ENCODE measurements at regions of chr1 and their contacts with region 1.

Region 1: DNA sequence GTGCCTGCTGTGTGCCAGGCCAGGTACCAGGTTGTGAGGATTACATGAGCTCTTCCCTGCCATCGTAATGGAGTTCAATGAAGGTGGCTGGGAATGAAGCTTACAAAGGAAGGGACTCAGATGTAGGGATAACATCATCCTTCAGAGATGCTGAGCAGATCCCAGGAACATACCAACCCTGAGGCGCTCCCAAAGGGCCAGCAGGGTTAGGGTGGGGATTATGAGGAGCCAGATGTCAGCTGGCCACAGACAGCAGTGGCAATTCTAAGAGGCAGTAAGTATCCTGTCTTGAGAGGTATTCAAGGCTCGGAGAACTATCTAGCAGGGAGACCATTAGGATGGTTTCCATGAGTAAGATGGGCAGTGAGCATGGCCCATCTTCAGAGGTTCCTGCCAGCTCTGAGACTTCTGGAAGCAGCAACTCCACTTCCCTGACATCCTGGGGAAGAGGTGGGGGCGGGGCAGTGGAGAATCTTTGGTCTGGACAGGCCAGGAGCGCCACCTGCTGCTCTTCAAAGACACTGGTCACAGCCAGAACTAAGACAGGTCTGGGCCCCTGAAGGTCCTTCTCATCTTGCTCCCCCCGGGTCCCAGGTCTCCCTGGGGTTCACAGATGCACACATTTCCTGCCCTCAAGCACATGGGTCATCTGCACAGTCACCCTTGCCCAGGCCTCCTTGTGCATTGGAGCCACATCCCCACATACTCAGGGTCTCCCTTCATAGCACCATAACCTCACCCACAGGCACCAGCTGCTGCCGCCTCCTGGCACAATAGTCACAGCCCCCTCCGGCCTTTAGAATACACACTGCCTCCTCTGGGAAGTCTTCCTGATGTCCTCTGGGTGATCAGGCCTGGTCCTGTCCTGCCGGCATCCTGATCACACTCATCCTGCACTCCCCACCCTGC is 2.7 kb upstream of the SDC3 start:
- DNase-seq: peak; percentile 57 to 86
- H3K4me3 ChIP-seq: no peak overlapping the region
- H3K27ac ChIP-seq: no peak overlapping the region
- H3K4me1 ChIP-seq: peaks cover 0 to 22% (median 17%) of the 10 kb centered on the region in 4 experiments; a peak in 6 of 7 replicates
- H3K27me3 ChIP-seq: peaks cover 0 to 20% (median 12%) of the 10 kb centered on the region in 4 experiments; a peak in 4 of 7 replicates
- CTCF ChIP-seq: peak; percentile 84 to 97 (median 88)
- EP300 ChIP-seq: no peak
- POLR2A ChIP-seq: no peak
- RAD21 ChIP-seq: peak; percentile 99 to 100

Region 2: GRCh38 chr1:30732277-30732996 is 178.9 kb before region 1 on chr1:
- CTCF ChIA-PET with region 1: interaction called, 51 read pairs
- POLR2A ChIA-PET with region 1: no interaction called
- DNase-seq: no peak
- H3K4me3 ChIP-seq: no peak overlapping the region
- H3K27ac ChIP-seq: no peak overlapping the region
- H3K4me1 ChIP-seq: peaks cover 0 to 7% (median 2%) of the 10 kb centered on the region in 4 experiments; a peak in 4 of 7 replicates
- H3K27me3 ChIP-seq: no peaks in the 10 kb centered on the region
- CTCF ChIP-seq: no peak
- EP300 ChIP-seq: no peak
- POLR2A ChIP-seq: no peak
- RAD21 ChIP-seq: no peak

Region 3: GRCh38 chr1:30816211-30817076 is 94.9 kb before region 1 on chr1:
- CTCF ChIA-PET with region 1: interaction called, 1,519 read pairs
- POLR2A ChIA-PET with region 1: no interaction called
- DNase-seq: peak in 1 of 2 experiments; percentile 93
- H3K4me3 ChIP-seq: peak overlapping the region in 2 of 4 experiments; percentile 8 to 29; a peak in 2 of 8 replicates
- H3K27ac ChIP-seq: no peak overlapping the region
- H3K4me1 ChIP-seq: peaks cover 13 to 28% (median 17%) of the 10 kb centered on the region in 4 experiments
- H3K27me3 ChIP-seq: no peaks in the 10 kb centered on the region
- CTCF ChIP-seq: no peak
- EP300 ChIP-seq: no peak
- POLR2A ChIP-seq: no peak
- RAD21 ChIP-seq: no peak

Region 4: DNA sequence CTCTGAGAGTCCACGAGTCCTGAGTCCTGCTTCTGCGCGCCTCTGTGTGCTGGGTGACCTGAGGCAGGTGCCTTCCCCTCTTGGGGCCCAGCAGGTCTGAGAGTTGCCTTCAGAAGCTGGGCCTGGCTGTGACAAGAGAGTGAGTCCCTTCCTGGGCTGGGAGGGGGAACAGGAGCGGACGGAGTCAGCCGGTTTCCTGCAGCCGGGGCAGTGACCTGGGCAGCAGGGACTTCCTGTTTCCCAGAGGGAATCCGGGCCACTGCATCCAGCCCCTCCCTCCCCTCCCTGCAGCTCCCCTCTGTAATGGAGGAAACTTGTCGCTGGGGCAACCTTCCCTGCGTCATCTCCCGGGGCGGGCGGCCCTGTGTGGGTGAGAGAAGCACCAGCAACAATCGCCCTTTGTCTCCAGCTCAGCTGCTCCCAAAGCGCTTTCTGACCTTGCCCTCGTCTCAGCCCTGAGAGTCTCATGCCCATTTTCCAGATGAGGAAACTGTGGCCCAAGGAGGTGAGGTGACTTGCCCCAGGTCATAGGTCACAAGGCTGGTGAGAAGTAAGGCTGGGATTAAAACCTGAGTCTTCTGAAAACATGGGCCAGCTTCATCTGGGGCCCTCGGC is 63.8 kb before region 1 on chr1:
- CTCF ChIA-PET with region 1: interaction called, 56 read pairs
- POLR2A ChIA-PET with region 1: no interaction called
- DNase-seq: peak in 1 of 2 experiments; percentile 72
- H3K4me3 ChIP-seq: no peak overlapping the region
- H3K27ac ChIP-seq: no peak overlapping the region; the same call in 1 of the 2 replicates
- H3K4me1 ChIP-seq: peaks cover 0 to 20% (median 15%) of the 10 kb centered on the region in 4 experiments; a peak in 6 of 7 replicates
- H3K27me3 ChIP-seq: no peaks in the 10 kb centered on the region
- CTCF ChIP-seq: no peak
- EP300 ChIP-seq: no peak
- POLR2A ChIP-seq: no peak
- RAD21 ChIP-seq: no peak

Region 5: GRCh38 chr1:30877205-30877912 is 33.9 kb before region 1 on chr1:
- CTCF ChIA-PET with region 1: interaction called, 31 read pairs
- POLR2A ChIA-PET with region 1: interaction called, 4 read pairs
- DNase-seq: no peak
- H3K4me3 ChIP-seq: no peak overlapping the region
- H3K27ac ChIP-seq: no peak overlapping the region
- H3K4me1 ChIP-seq: peaks cover 3 to 13% (median 7%) of the 10 kb centered on the region in 4 experiments
- H3K27me3 ChIP-seq: no peaks in the 10 kb centered on the region; a peak in 1 of 7 replicates
- CTCF ChIP-seq: no peak
- EP300 ChIP-seq: no peak
- POLR2A ChIP-seq: no peak
- RAD21 ChIP-seq: no peak

Region 6: GRCh38 chr1:30952098-30952497 is 40.8 kb after region 1 on chr1:
- CTCF ChIA-PET with region 1: no interaction called
- POLR2A ChIA-PET with region 1: no interaction called
- DNase-seq: no peak
- H3K4me3 ChIP-seq: no peak overlapping the region
- H3K27ac ChIP-seq: no peak overlapping the region
- H3K4me1 ChIP-seq: no peaks in the 10 kb centered on the region
- H3K27me3 ChIP-seq: no peaks in the 10 kb centered on the region
- CTCF ChIP-seq: no peak
- EP300 ChIP-seq: no peak
- POLR2A ChIP-seq: no peak
- RAD21 ChIP-seq: no peak

Region 7: DNA sequence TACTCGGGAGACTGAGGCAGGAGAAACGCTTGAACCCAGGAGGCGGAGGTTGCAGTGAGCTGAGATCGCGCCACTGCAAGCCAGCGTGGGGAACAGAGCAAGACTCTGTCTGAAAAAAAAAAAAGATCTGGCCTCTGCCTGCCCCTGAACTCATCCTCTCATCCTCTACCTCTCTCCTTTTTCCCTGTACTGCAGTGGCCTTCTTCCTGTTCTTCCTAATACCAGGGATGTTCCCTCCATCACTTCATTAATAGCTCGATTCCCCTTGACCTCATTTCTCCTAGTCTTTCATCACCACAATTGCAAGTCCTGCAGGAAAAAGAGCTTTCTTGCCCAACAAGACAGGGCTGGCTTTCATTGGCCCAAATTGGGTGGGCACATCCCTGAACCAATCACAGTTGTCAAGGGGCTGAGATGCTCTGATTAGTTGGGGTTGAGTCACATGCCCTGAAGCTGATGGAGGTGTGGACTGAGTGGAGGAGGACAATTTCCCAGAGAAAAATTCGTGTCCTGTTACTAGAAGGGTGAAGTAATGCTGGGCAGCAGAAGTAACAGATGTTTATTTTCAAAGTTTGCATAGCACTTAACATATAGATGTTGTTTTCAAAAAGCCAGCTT is 241.0 kb after region 1 on chr1:
- CTCF ChIA-PET with region 1: no interaction called
- POLR2A ChIA-PET with region 1: no interaction called
- DNase-seq: no peak
- H3K4me3 ChIP-seq: no peak overlapping the region
- H3K27ac ChIP-seq: no peak overlapping the region
- H3K4me1 ChIP-seq: peaks cover 0 to 3% (median 1%) of the 10 kb centered on the region in 4 experiments; a peak in 4 of 7 replicates
- H3K27me3 ChIP-seq: no peaks in the 10 kb centered on the region
- CTCF ChIP-seq: no peak
- EP300 ChIP-seq: no peak
- POLR2A ChIP-seq: no peak
- RAD21 ChIP-seq: no peak

Measured in H1 (cell line).